Vagina (tissue), 2 donors: ENCODE measurements at regions of chr11 and their contacts with region 1.

Region 1: DNA sequence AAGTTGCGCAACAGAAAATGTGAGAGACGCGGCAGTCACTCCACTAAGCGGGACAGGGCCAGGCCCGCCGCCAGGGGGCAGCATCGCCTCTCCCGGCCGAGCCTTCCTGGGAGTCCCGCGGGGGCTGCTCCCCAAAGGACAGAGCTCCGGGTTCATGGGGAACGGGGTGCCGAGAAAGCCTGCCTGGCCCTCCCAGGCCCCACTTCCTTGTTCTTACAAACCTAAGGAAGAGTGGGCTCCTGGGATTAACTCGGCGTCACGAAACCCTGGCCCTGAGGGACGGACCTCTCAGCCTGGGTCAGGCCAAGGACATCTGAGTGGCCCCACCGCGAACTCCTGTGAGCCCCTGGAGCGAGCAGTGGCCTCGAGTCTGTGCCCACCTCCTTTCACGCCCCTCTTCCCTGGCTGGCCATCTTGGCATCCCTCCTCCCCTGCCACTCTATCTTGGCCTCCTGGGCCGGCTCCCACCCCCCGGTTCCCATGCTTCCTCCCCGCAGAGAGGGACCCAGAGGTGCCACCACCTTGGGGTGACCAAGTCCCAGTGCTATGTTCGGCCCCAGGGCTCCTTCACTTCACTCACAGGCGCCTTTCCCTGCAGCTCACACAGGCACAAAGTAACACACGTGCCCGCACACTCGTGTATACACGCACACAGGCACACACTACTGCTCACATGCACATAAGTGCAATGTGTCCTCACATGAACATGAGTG is 99.9 kb upstream of the FGF3 start:
- DNase-seq: no peak
- H3K4me3 ChIP-seq: no peak overlapping the region
- H3K27ac ChIP-seq: no peak overlapping the region
- H3K4me1 ChIP-seq: peaks cover 30% of the 10 kb centered on the region
- H3K27me3 ChIP-seq: no peaks in the 10 kb centered on the region
- CTCF ChIP-seq: peak; percentile 73 to 81 (median 76)
- POLR2A ChIP-seq: no peak

Region 2: GRCh38 chr11:70082829-70083228 is 163.7 kb after region 1 on chr11:
- intact Hi-C with region 1: loop called (anchors 10 kb)
- DNase-seq: no peak
- H3K4me3 ChIP-seq: no peak overlapping the region
- H3K27ac ChIP-seq: no peak overlapping the region
- H3K4me1 ChIP-seq: peaks cover 14% of the 10 kb centered on the region
- H3K27me3 ChIP-seq: no peaks in the 10 kb centered on the region
- CTCF ChIP-seq: no peak
- POLR2A ChIP-seq: no peak

Region 3: GRCh38 chr11:70191495-70192140 is 272.5 kb after region 1 on chr11:
- intact Hi-C with region 1: loop called (anchors 5 kb)
- DNase-seq: no peak
- H3K4me3 ChIP-seq: no peak overlapping the region
- H3K27ac ChIP-seq: no peak overlapping the region
- H3K4me1 ChIP-seq: no peaks in the 10 kb centered on the region
- H3K27me3 ChIP-seq: no peaks in the 10 kb centered on the region
- CTCF ChIP-seq: peak; percentile 58 to 65 (median 60)
- POLR2A ChIP-seq: no peak